ENCODE measurements at regions of chr4 and their contacts with region 1.

Region 1: GRCh38 chr4:86999136-86999643 is 64.4 kb downstream of the AFF1 start:
- DNase-seq: no peak
- ATAC-seq: no peak
- H3K4me3 ChIP-seq: no peak overlapping the region
- H3K27ac ChIP-seq: peak overlapping the region in 2 of 4 donors; percentile 15 to 35
- H3K4me1 ChIP-seq: peaks cover 44% of the 10 kb centered on the region
- H3K27me3 ChIP-seq: no peaks in the 10 kb centered on the region
- CTCF ChIP-seq: no peak
- POLR2A ChIP-seq: no peak

Region 2: GRCh38 chr4:86939729-86940575 is 59.2 kb before region 1 on chr4:
- intact Hi-C with region 1: loop called (anchors 10 kb)
- DNase-seq: peak in 1 of 4 donors; percentile 12
- ATAC-seq: no peak
- H3K4me3 ChIP-seq: no peak overlapping the region
- H3K27ac ChIP-seq: peak overlapping the region; percentile 53 to 99 (median 74)
- H3K4me1 ChIP-seq: peaks cover 82% of the 10 kb centered on the region
- H3K27me3 ChIP-seq: no peaks in the 10 kb centered on the region
- CTCF ChIP-seq: no peak
- POLR2A ChIP-seq: no peak

Region 3: GRCh38 chr4:87281603-87282002 is 282.4 kb after region 1 on chr4:
- intact Hi-C with region 1: no loop called
- DNase-seq: no peak
- ATAC-seq: no peak
- H3K4me3 ChIP-seq: no peak overlapping the region
- H3K27ac ChIP-seq: no peak overlapping the region
- H3K4me1 ChIP-seq: peaks cover 7% of the 10 kb centered on the region
- H3K27me3 ChIP-seq: no peaks in the 10 kb centered on the region
- CTCF ChIP-seq: no peak
- POLR2A ChIP-seq: no peak